ENCODE measurements at regions of chr1 and their contacts with region 1.

Region 1: DNA sequence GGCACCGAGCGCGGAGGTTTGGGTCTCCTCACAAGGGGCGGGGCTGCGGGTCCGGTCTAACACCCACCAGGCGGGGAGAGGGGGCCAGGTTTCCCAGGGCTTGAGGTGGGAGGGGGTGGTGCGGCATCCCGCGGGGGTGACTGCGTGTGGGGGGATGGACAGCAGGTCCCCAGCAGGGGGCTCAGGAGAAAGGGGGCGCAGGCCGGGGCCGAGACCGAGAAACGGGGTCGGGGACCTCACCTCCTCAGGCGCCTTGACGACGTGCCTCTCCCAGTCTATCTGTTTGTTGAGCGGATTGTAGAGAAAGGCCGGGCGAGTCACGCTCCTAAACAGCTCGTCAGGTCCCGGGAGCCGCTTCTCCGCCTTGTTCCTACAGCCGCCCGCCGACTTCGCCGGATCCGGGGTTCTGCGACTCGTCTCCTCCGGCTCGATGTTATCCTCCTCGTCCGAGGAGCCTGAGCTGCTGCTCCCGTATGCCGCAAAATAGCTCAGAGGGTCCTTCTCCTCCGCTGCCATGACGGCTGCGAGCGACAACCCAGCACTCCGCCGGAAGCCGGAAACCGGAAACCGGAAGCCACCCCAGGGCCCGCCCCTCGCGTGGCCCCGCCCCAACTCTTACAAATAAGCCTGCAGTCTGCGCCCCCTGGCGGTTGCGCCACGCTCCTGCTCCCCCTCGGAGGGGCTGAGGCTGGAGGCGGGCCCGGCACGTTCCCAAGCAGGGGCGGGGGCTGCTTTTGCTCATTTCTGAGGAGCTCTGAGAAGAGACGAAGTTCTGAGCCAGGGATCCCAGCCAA is at the start of gene C1orf52:
- DNase-seq: peak; percentile 86 to 99 (median 98)
- ATAC-seq: peak; percentile 96
- H3K4me3 ChIP-seq: peak within 1 kb of the TSS; percentile 65 to 93
- H3K4me3 Mint-ChIP-seq: peak within 1 kb of the TSS; percentile 97
- H3K27ac ChIP-seq: peak within 1 kb of the TSS; percentile 78 to 88
- H3K27ac Mint-ChIP-seq: peak within 1 kb of the TSS; percentile 95
- H3K4me1 ChIP-seq: peaks cover 24% of the 10 kb centered on the region
- H3K4me1 Mint-ChIP-seq: peaks cover 36% of the 10 kb centered on the region
- H3K27me3 ChIP-seq: no peaks in the 10 kb centered on the region
- H3K27me3 Mint-ChIP-seq: no peaks in the 10 kb centered on the region
- CTCF ChIP-seq: peak; percentile 99
- total RNA-seq, gene C1orf52: 70.7 to 74.4 TPM

Region 2: GRCh38 chr1:84996846-84997666 is 262.3 kb before region 1 on chr1 and contains the start of gene MCOLN2:
- CTCF ChIA-PET with region 1: interaction called, 3 read pairs
- POLR2A ChIA-PET with region 1: no interaction called
- intact Hi-C with region 1: loop called in 1 of 2 experiments (anchors 1 kb)
- DNase-seq: peak; percentile 16 to 77 (median 51)
- ATAC-seq: peak; percentile 69
- H3K4me3 ChIP-seq: peak within 1 kb of the TSS; percentile 66 to 84
- H3K4me3 Mint-ChIP-seq: peak within 1 kb of the TSS; percentile 84
- H3K27ac ChIP-seq: peak within 1 kb of the TSS; percentile 28 to 81
- H3K27ac Mint-ChIP-seq: peak within 1 kb of the TSS; percentile 57
- H3K4me1 ChIP-seq: peaks cover 20% of the 10 kb centered on the region
- H3K4me1 Mint-ChIP-seq: peaks cover 34% of the 10 kb centered on the region
- H3K27me3 ChIP-seq: no peaks in the 10 kb centered on the region
- H3K27me3 Mint-ChIP-seq: peaks cover 23% of the 10 kb centered on the region
- CTCF ChIP-seq: no peak
- total RNA-seq, gene MCOLN2: 12.7 to 23.1 TPM

Region 3: DNA sequence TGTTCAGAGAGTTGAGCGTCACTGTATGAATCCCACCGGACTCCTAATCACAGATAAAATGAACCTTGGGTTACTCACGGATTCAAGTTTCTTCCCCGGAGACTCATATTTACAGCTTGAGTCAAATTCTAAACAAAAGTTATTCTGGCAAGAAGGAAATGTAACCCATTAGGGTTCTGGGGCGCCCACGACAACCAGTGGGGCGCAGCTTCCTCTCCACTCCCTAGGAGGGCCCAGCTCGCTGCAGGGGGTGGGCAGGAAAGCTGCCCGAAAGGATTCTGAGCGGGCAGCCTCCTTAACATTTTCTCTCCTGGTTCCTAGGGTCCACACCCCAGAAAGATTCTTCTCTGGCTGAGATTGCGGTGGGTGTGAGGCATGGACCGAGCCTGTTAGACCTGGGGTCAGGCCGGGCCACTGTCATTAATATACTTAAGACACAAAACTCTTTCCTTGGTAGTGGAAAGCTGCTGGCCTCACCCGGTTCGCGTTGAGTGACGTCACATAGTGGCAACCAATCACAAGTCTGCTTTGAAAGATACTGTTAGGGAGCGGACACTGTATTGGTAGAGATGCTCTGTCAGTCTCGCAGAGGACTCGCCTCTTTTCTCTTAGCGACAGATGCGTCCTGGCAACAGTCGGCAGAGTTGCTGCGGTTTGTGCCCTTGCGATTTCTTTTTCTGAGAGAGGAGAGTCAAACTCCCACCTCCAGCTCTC is 197.4 kb before region 1 on chr1:
- CTCF ChIA-PET with region 1: interaction called, 4 read pairs
- POLR2A ChIA-PET with region 1: no interaction called
- intact Hi-C with region 1: loop called (anchors 1 to 2 kb)
- DNase-seq: peak; percentile 64 to 96 (median 81)
- ATAC-seq: peak; percentile 99
- H3K4me3 ChIP-seq: peak overlapping the region; percentile 38 to 49
- H3K4me3 Mint-ChIP-seq: peak overlapping the region; percentile 84
- H3K27ac ChIP-seq: peak overlapping the region in 1 of 2 experiments; percentile 29
- H3K27ac Mint-ChIP-seq: peak overlapping the region; percentile 72
- H3K4me1 ChIP-seq: peaks cover 4% of the 10 kb centered on the region
- H3K4me1 Mint-ChIP-seq: peaks cover 14% of the 10 kb centered on the region
- H3K27me3 ChIP-seq: no peaks in the 10 kb centered on the region
- H3K27me3 Mint-ChIP-seq: peaks cover 12% of the 10 kb centered on the region
- CTCF ChIP-seq: no peak

Region 4: DNA sequence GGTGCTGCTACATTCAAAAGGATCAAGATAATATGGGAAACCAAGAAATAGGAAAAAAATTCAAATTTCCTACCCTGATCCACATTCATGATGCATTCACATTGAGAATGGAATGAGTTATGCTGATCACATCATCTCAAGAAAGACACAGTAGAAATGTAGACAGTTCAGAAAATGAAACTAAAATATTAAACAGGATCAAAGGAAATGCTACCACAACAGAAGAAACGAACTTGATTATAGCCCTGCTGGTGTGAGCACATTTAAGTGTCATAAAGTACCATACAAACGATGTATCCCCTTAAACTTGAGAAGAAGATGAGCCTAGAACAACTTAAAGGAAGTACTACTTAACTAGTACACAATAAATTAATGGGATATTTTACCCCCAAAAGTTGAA is 79.8 kb before region 1 on chr1:
- CTCF ChIA-PET with region 1: interaction called, 5 read pairs
- POLR2A ChIA-PET with region 1: no interaction called
- intact Hi-C with region 1: loop called in 1 of 2 experiments (anchors 5 kb)
- DNase-seq: peak in 2 of 9 experiments; percentile 48 to 68
- ATAC-seq: peak; percentile 95
- H3K4me3 ChIP-seq: peak overlapping the region in 1 of 2 experiments; percentile 3
- H3K4me3 Mint-ChIP-seq: peak overlapping the region; percentile 55
- H3K27ac ChIP-seq: no peak overlapping the region
- H3K27ac Mint-ChIP-seq: no peak overlapping the region
- H3K4me1 ChIP-seq: peaks cover 11% of the 10 kb centered on the region
- H3K4me1 Mint-ChIP-seq: peaks cover 19% of the 10 kb centered on the region
- H3K27me3 ChIP-seq: no peaks in the 10 kb centered on the region
- H3K27me3 Mint-ChIP-seq: no peaks in the 10 kb centered on the region
- CTCF ChIP-seq: no peak

Region 5: GRCh38 chr1:85245891-85246290 is 13.4 kb before region 1 on chr1:
- CTCF ChIA-PET with region 1: interaction called, 17 read pairs
- POLR2A ChIA-PET with region 1: interaction called, 3 read pairs
- intact Hi-C with region 1: no loop called
- DNase-seq: no peak
- ATAC-seq: no peak
- H3K4me3 ChIP-seq: no peak overlapping the region
- H3K4me3 Mint-ChIP-seq: no peak overlapping the region
- H3K27ac ChIP-seq: no peak overlapping the region
- H3K27ac Mint-ChIP-seq: no peak overlapping the region
- H3K4me1 ChIP-seq: no peaks in the 10 kb centered on the region
- H3K4me1 Mint-ChIP-seq: peaks cover 4% of the 10 kb centered on the region
- H3K27me3 ChIP-seq: no peaks in the 10 kb centered on the region
- H3K27me3 Mint-ChIP-seq: no peaks in the 10 kb centered on the region
- CTCF ChIP-seq: no peak